ENCODE measurements at regions of chr18 and their contacts with region 1.

Region 1: DNA sequence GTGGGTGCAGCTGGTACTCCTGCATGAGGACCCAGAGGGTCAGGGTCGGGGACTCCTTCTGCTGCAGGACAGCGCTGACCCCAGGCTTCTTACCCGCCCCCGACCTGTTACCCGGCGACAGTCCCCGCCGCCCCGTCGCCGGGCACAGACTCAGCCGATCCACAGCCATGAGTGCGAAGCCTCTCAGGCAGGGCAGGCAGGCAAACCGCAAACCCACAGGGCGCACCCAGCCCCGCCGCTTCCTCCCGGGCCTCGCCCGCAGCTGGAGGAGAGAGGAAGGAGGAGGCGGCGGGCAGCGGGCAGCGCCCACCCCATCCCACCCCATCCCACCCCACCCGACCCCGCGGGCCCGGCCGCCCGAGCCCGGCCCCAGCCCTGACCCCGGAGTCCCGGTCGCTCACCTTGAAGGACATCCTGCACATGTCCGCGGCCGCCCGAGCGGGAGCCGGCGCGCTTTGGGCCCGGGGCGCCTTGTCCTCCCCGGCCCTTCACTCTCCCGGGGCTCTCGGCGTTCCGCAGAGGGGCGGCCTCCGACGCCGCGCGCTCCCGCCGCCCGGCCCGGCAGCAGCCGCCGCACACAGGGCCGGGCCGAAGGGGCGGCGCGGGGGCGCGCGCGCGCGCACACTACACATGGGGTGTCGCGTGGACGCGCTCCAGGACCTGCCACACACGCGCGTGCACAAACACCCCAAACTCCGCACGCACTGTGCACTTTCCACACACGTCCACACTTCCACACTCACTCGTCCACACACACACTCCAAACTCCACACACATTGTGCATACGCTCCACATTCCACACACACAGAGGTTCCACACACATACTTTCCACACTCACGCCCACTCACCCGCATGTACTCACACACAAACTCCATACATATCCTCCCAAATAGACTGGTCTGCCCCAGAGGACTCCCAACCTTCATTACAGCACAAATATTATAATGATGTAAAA is at the start of gene ANKRD29:
- DNase-seq: peak; percentile 16
- H3K4me3 ChIP-seq: peak within 1 kb of the TSS; percentile 30 to 38 (median 33)
- H3K27ac ChIP-seq: no peak within 1 kb of the TSS
- H3K4me1 ChIP-seq: peaks cover 3% of the 10 kb centered on the region
- H3K27me3 ChIP-seq: peaks cover 17 to 26% of the 10 kb centered on the region in 2 experiments
- CTCF ChIP-seq: no peak
- POLR2A ChIP-seq: no peak
- total RNA-seq, gene ANKRD29: 1.2 and 2.6 TPM in 2 replicates

Region 2: GRCh38 chr18:23458830-23459529 is 203.6 kb before region 1 on chr18:
- CTCF ChIA-PET with region 1: no interaction called
- POLR2A ChIA-PET with region 1: no interaction called
- dilution Hi-C with region 1: no loop called
- intact Hi-C with region 1: no loop called
- DNase-seq: peak; percentile 7
- H3K4me3 ChIP-seq: no peak overlapping the region
- H3K27ac ChIP-seq: no peak overlapping the region
- H3K4me1 ChIP-seq: peaks cover 13% of the 10 kb centered on the region
- H3K27me3 ChIP-seq: no peaks in the 10 kb centered on the region
- CTCF ChIP-seq: no peak
- POLR2A ChIP-seq: no peak

Region 3: DNA sequence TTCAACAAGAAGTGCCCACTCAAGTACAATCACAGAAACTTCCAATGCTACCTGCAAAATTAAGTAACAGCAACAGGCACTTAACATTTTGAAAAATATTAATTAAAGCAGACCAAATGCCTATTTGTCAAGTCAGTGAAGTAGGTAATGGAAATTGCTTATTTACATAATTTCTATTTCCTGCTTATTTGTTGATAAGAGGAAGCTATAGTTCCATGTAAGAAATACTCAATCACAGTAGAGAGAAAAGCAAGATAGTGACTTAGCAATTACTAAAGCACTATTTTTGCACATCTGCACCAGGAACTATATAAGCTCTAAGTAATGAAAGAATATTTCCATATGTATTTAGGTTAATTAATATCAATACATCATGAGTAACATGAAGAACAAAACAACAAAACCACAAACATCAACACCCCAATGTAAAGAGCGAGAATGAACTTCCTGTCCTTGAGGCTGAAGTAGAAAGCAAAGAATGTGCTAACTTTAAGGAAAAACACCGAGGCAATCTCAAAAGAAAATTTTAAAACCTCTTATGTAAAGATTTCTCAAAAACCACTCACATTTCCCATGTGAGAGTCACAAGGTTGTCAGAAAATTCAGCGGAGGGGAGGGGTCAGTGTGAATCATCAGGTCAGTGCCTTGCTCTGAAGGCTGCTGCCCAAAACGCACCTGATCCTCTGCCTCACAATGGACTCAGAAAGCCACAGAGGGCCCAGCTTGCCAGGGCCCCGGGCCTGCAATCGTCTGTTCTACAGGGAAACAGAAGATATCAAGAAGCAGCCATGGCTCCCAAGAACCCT is 88.8 kb before region 1 on chr18:
- CTCF ChIA-PET with region 1: no interaction called
- POLR2A ChIA-PET with region 1: no interaction called
- dilution Hi-C with region 1: no loop called
- intact Hi-C with region 1: no loop called
- DNase-seq: peak; percentile 25
- H3K4me3 ChIP-seq: no peak overlapping the region
- H3K27ac ChIP-seq: no peak overlapping the region
- H3K4me1 ChIP-seq: peaks cover 12% of the 10 kb centered on the region
- H3K27me3 ChIP-seq: no peaks in the 10 kb centered on the region
- CTCF ChIP-seq: no peak
- POLR2A ChIP-seq: no peak

Region 4: DNA sequence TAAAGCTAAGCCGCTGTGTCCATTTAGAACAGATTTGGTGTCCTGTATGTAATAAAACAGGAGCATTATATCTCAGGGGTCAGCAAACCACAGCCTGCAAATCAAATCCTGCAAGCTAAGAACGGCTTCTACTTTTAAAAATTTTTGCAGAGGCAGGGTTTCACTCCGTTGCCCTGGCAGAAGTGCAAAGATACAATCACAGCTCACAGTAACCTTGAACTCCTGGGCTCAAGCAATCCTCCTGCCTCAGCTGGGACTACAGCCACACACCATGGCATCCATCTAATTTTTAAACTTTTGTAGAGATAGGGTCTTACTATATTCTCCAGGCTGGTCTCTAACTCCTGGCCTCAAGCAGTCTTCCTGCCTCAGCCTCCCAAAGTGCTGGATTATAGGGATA is 47.7 kb before region 1 on chr18:
- CTCF ChIA-PET with region 1: no interaction called
- POLR2A ChIA-PET with region 1: no interaction called
- dilution Hi-C with region 1: no loop called
- intact Hi-C with region 1: no loop called
- DNase-seq: no peak
- H3K4me3 ChIP-seq: no peak overlapping the region
- H3K27ac ChIP-seq: no peak overlapping the region
- H3K4me1 ChIP-seq: peaks cover 6% of the 10 kb centered on the region
- H3K27me3 ChIP-seq: peaks cover 2 to 6% of the 10 kb centered on the region in 2 experiments
- CTCF ChIP-seq: no peak
- POLR2A ChIP-seq: no peak

Region 5: GRCh38 chr18:23650968-23651927 is 11.3 kb before region 1 on chr18:
- CTCF ChIA-PET with region 1: interaction called, 11 read pairs
- POLR2A ChIA-PET with region 1: no interaction called
- dilution Hi-C with region 1: no loop called
- intact Hi-C with region 1: no loop called
- DNase-seq: peak; percentile 51
- H3K4me3 ChIP-seq: no peak overlapping the region
- H3K27ac ChIP-seq: no peak overlapping the region
- H3K4me1 ChIP-seq: peaks cover 10% of the 10 kb centered on the region
- H3K27me3 ChIP-seq: peaks cover 0 to 4% of the 10 kb centered on the region in 2 experiments
- CTCF ChIP-seq: no peak
- POLR2A ChIP-seq: no peak

Region 6: DNA sequence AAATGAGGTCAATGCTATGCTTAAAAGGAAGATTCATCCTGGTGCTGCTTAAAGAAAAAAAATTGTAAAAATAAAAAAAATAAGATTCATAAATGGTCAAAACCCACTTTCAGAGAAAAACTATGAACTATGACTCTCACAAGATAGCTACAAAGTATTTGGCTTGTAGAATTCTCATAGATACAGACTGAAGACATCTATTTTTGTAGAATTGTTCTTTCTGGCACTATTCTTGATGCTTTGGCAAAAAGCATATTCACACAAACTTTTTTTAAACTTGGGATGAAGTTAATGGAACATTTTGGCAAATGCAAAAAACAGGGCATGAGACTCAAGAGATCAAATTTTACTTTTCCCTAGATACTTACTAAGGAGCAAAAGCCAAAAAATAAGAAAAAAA is 12.7 kb after region 1 on chr18:
- CTCF ChIA-PET with region 1: interaction called, 10 read pairs
- POLR2A ChIA-PET with region 1: no interaction called
- dilution Hi-C with region 1: no loop called
- intact Hi-C with region 1: no loop called
- DNase-seq: no peak
- H3K4me3 ChIP-seq: no peak overlapping the region
- H3K27ac ChIP-seq: no peak overlapping the region
- H3K4me1 ChIP-seq: no peaks in the 10 kb centered on the region
- H3K27me3 ChIP-seq: peaks cover 17 to 23% of the 10 kb centered on the region in 2 experiments
- CTCF ChIP-seq: no peak
- POLR2A ChIP-seq: no peak